Brain microvascular endothelial cell (primary cell): ENCODE measurements at regions of chr2 and their contacts with region 1.

Region 1: GRCh38 chr2:39227628-39228412 is 15.9 kb downstream of the CDKL4 start:
- DNase-seq: peak; percentile 69
- H3K4me3 ChIP-seq: peak overlapping the region; percentile 50
- H3K27ac ChIP-seq: no peak overlapping the region
- H3K27me3 ChIP-seq: no peaks in the 10 kb centered on the region
- CTCF ChIP-seq: peak; percentile 91

Region 2: GRCh38 chr2:39017334-39017733 is 210.5 kb before region 1 on chr2:
- in situ Hi-C with region 1: no loop called
- DNase-seq: no peak
- H3K4me3 ChIP-seq: no peak overlapping the region
- H3K27ac ChIP-seq: no peak overlapping the region
- H3K27me3 ChIP-seq: no peaks in the 10 kb centered on the region
- CTCF ChIP-seq: no peak

Region 3: DNA sequence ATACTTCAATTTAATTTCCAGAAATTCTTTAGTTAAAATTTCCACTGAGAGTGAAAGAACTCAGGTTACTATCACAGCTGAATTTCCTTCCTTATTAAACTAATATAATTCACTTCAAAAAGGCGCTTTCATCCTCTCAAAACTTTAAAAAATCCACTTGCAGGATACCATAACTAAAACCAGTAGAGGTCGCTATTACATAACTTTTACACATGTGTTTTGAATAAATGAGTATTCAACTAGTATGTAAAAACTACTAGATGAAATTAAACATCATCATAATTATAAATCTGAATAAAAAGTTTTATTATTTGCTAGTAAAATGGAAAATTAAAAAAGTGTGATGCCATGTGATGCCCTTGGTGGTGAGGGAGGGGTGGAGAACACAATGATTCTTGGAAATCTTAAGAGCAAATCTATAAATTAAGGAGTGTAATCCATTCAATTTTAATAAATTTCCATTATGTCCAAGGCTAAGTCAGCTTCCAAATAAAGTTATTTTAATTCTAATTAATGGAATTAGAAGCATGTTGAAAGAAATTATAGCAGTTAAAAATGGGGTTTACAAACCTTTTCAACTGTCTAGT is 168.4 kb before region 1 on chr2:
- in situ Hi-C with region 1: loop called (anchors 25 kb)
- DNase-seq: no peak
- H3K4me3 ChIP-seq: no peak overlapping the region
- H3K27ac ChIP-seq: no peak overlapping the region
- H3K27me3 ChIP-seq: no peaks in the 10 kb centered on the region
- CTCF ChIP-seq: peak; percentile 19

Region 4: DNA sequence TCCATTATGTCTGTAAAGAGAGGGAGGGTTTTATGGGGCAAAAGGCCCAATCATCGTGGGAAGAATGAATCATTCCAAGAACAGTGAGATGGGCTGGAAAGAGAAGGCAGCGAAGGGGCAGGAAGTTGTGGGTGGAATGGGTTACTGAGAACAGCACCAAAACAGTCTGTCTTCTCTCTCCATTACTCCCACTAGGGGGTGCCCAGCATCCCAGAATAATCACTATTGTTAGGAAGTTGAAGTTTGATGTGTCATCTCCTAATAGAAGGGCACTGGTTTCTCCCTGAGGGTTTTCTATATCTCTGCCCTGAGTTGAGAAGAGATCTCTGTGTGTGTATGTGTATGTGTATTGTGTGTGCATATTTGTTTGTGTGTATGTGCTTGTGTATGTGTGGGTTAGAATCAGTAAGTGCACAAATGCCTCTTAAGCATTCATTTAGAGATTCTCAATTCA is 285.8 kb after region 1 on chr2:
- in situ Hi-C with region 1: no loop called
- DNase-seq: peak; percentile 97
- H3K4me3 ChIP-seq: no peak overlapping the region
- H3K27ac ChIP-seq: peak overlapping the region; percentile 75
- H3K27me3 ChIP-seq: no peaks in the 10 kb centered on the region
- CTCF ChIP-seq: peak; percentile 84